ENCODE measurements at regions of chr15 and their contacts with region 1.

Region 1: DNA sequence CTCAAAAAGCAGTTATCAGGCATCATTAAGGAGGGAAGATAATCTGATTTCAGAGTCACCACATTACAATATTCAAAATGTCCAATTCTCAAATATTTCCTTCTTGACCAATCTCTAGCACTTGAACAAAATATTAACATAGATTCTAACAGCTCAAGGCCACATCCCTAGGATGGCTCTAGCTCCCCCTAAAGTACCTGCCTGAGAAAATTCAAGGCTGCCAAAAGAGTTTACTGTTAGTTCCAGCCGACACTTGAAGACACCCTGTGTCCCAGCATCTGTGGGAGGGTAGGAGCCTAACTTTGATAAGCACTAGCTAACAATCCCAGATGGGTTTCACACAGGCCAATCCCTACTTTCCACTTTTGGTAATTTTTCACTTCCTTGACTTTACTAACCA is 10.4 kb downstream of the NSMCE3 start:
- DNase-seq: no peak
- H3K4me3 Mint-ChIP-seq: no peak overlapping the region
- H3K27ac Mint-ChIP-seq: no peak overlapping the region
- H3K4me1 Mint-ChIP-seq: no peaks in the 10 kb centered on the region
- H3K27me3 Mint-ChIP-seq: peaks cover 15% of the 10 kb centered on the region

Region 2: GRCh38 chr15:29312387-29312786 is 53.2 kb after region 1 on chr15:
- intact Hi-C with region 1: loop called (anchors 10 kb)
- DNase-seq: no peak
- H3K4me3 Mint-ChIP-seq: no peak overlapping the region
- H3K27ac Mint-ChIP-seq: no peak overlapping the region
- H3K4me1 Mint-ChIP-seq: no peaks in the 10 kb centered on the region
- H3K27me3 Mint-ChIP-seq: peaks cover 2% of the 10 kb centered on the region

Measured in activated CD4-positive, alpha-beta T cell treated with anti-CD3 and anti-CD28 coated beads, Interleukin-2, amount 10 ng/mL, durations not matched to agents 24 days and 14 days (primary cell).